Mammary epithelial cell (primary cell): ENCODE measurements at regions of chr1 and their contacts with region 1.

Region 1: GRCh38 chr1:54488779-54489626 is 59.0 kb upstream of the ACOT11 start:
- DNase-seq: peak; percentile 60
- H3K4me3 ChIP-seq: peak overlapping the region; percentile 52 to 79 (median 58)
- H3K27ac ChIP-seq: peak overlapping the region; percentile 72
- H3K4me1 ChIP-seq: peaks cover 26% of the 10 kb centered on the region
- H3K27me3 ChIP-seq: no peaks in the 10 kb centered on the region
- CTCF ChIP-seq: peak; percentile 44 to 90

Region 2: DNA sequence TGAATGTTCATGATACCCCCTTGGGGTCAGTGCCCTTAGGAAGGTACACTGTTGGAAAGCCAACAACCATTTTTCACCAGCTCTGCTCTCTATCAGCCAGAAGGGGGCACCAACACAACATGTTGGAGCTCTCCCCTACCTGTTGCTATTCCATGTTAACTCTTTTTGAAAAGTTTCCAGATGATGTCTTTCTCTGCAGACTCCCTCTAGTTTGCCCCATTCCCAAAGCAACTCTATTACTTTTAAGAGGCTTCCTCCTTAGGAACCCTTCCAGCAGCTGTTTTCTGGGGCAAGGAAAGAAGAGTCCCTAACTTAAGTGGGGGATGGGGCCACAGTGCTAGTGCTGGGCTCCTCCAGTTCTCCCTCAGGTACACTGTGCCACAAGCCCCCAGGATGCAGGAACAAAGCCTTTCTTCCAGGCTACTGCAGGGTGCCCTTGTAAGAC is 628.0 kb before region 1 on chr1:
- CTCF ChIA-PET with region 1: no interaction called
- dilution Hi-C with region 1: no loop called
- in situ Hi-C with region 1: no loop called
- intact Hi-C with region 1: loop called (anchors 5 kb)
- DNase-seq: peak; percentile 30
- H3K4me3 ChIP-seq: no peak overlapping the region
- H3K27ac ChIP-seq: no peak overlapping the region
- H3K4me1 ChIP-seq: no peaks in the 10 kb centered on the region
- H3K27me3 ChIP-seq: no peaks in the 10 kb centered on the region
- CTCF ChIP-seq: peak; percentile 72 to 85

Region 3: GRCh38 chr1:54121482-54122134 is 367.4 kb before region 1 on chr1:
- CTCF ChIA-PET with region 1: no interaction called
- dilution Hi-C with region 1: no loop called
- in situ Hi-C with region 1: loop called (anchors 5 to 10 kb)
- intact Hi-C with region 1: loop called (anchors 1 kb)
- DNase-seq: peak; percentile 44
- H3K4me3 ChIP-seq: peak overlapping the region in 2 of 3 experiments; percentile 6 to 22
- H3K27ac ChIP-seq: no peak overlapping the region
- H3K4me1 ChIP-seq: peaks cover 8% of the 10 kb centered on the region
- H3K27me3 ChIP-seq: no peaks in the 10 kb centered on the region
- CTCF ChIP-seq: peak; percentile 57 to 79

Region 4: DNA sequence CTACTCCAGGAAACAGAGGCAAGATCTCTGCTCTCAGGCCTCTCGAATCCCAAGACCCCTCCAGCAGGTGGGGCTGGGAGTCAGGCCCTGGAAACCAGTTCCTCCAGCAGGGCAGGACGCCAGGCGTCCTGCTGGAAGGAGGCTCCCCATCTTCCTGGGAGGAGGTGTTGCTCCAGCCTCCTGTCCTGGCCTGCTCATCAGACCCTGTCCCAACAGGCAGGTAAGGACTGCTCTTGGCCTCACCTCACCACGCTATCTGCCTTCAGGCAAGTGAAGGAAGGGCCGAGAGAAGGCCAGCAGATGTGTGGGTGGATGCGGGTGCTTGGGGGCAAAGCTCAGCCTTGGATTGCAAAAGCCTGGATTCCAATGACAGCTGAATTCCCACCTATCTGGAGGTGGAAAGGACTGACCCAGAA is 165.7 kb before region 1 on chr1:
- CTCF ChIA-PET with region 1: interaction called, 4 read pairs
- dilution Hi-C with region 1: no loop called
- in situ Hi-C with region 1: no loop called
- intact Hi-C with region 1: loop called (anchors 1 kb)
- DNase-seq: peak; percentile 94
- H3K4me3 ChIP-seq: no peak overlapping the region
- H3K27ac ChIP-seq: peak overlapping the region; percentile 60
- H3K4me1 ChIP-seq: peaks cover 40% of the 10 kb centered on the region
- H3K27me3 ChIP-seq: no peaks in the 10 kb centered on the region
- CTCF ChIP-seq: peak; percentile 36 to 69

Region 5: DNA sequence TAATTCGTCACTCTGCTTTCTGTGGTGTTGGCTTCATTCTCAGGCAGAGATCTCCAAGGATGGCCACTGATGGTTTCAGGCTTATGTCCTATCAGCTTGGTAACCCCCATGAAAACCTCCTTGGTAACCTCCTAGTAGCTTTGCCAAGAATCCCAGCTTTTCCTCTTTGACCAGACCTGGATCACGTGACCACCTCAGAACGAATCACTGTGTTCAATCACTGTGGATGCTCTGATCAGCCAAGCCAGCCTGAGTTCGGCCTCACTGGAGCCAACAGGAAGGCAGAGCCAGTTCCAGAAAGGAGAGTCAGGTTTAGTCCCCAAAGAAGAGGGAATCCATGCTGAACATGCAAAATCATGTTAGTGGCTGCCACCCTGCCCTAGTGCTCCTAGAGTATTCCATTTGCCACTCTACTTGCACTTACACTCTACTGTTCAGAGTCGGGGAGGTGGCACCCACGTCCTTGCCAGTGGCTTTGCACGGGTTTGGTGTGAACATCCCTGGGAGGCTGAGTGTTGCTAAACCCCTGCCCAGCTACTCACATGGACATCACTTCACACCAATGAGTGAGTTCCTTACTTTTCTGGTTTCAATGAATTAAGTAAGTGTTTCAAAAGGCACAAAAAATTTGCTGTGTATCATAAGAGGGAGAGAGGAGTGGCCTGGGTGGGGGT is 49.3 kb before region 1 on chr1:
- CTCF ChIA-PET with region 1: no interaction called
- dilution Hi-C with region 1: loop called (anchors 5 kb)
- in situ Hi-C with region 1: no loop called
- intact Hi-C with region 1: no loop called
- DNase-seq: no peak
- H3K4me3 ChIP-seq: no peak overlapping the region
- H3K27ac ChIP-seq: no peak overlapping the region
- H3K4me1 ChIP-seq: no peaks in the 10 kb centered on the region
- H3K27me3 ChIP-seq: no peaks in the 10 kb centered on the region
- CTCF ChIP-seq: no peak

Region 6: DNA sequence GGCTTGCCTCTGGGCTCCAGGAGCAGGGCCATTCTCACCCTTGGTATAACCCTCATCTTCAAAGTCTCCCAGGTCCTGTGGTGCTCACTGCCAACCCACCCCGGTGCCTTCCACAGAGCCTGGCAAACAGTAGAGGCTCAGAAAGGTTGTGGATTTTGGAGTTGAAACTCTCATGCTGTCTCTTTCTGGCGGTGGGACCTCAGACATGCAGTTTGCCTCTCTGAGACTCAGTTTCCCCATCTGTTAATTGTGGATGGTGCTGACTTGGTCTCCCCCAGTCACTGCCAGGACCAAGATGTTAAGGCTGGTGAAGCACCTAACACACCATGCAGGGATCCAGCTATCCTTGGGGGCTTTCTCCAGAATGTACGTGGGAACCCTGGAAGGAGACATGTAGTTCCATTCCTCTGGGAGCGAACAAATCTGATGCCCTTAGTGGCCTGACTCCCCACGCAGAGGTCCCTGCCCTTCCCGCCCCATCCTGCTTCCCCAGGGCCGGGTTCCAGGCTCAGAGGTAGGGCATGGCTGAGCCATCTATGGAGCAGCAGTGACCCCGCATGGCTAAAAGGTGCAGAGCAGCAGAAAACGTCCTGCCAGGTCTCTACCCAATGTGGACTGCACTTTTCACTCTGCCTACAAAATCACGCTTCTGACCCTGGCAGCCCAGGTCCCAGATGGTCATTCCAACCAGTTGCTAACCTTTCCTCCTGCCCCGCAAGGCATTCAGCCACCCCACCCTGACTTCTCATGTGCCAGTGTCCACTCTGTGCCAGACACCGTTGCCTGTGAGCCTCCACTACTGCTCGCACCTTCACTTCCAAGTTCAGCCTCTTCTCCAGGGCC is 321.3 kb after region 1 on chr1:
- CTCF ChIA-PET with region 1: no interaction called
- dilution Hi-C with region 1: no loop called
- in situ Hi-C with region 1: loop called in 1 of 2 experiments (anchors 10 kb)
- intact Hi-C with region 1: loop called (anchors 2 kb)
- DNase-seq: peak; percentile 38
- H3K4me3 ChIP-seq: no peak overlapping the region
- H3K27ac ChIP-seq: no peak overlapping the region
- H3K4me1 ChIP-seq: peaks cover 14% of the 10 kb centered on the region
- H3K27me3 ChIP-seq: no peaks in the 10 kb centered on the region
- CTCF ChIP-seq: peak; percentile 92 to 97